Panc1 (cell line): ENCODE measurements at regions of chr12 and their contacts with region 1.

Region 1: GRCh38 chr12:5925646-5926045 is 19.4 kb downstream of the ANO2 start:
- DNase-seq: no peak
- ATAC-seq: no peak
- H3K4me3 ChIP-seq: no peak overlapping the region
- H3K27ac ChIP-seq: no peak overlapping the region
- H3K4me1 ChIP-seq: no peaks in the 10 kb centered on the region
- H3K27me3 ChIP-seq: 0 out of 2 replicates have a peak, but pooled peaks cover 2% of the 10 kb centered on the region
- CTCF ChIP-seq: no peak

Region 2: GRCh38 chr12:5295996-5296395 is 629.6 kb before region 1 on chr12:
- CTCF ChIA-PET with region 1: no interaction called
- POLR2A ChIA-PET with region 1: interaction called, 11 read pairs
- in situ Hi-C with region 1: no loop called
- intact Hi-C with region 1: no loop called
- DNase-seq: no peak
- ATAC-seq: no peak
- H3K4me3 ChIP-seq: no peak overlapping the region
- H3K27ac ChIP-seq: no peak overlapping the region
- H3K4me1 ChIP-seq: no peaks in the 10 kb centered on the region
- H3K27me3 ChIP-seq: no peaks in the 10 kb centered on the region; the same call in 1 of the 2 replicates
- CTCF ChIP-seq: no peak

Region 3: GRCh38 chr12:5973461-5974130 is 48.0 kb after region 1 on chr12:
- CTCF ChIA-PET with region 1: no interaction called
- POLR2A ChIA-PET with region 1: no interaction called
- in situ Hi-C with region 1: no loop called
- intact Hi-C with region 1: no loop called
- DNase-seq: no peak
- ATAC-seq: no peak
- H3K4me3 ChIP-seq: no peak overlapping the region
- H3K27ac ChIP-seq: no peak overlapping the region
- H3K4me1 ChIP-seq: no peaks in the 10 kb centered on the region
- H3K27me3 ChIP-seq: peaks cover 5% of the 10 kb centered on the region
- CTCF ChIP-seq: no peak